Heart left ventricle (tissue), 16 donors: ENCODE measurements at regions of chr10 and their contacts with region 1.

Region 1: GRCh38 chr10:32308027-32308603 is 38.8 kb downstream of the EPC1 start:
- DNase-seq: no peak
- ATAC-seq: no peak
- H3K4me3 ChIP-seq: no peak overlapping the region
- H3K27ac ChIP-seq: no peak overlapping the region
- H3K4me1 ChIP-seq: peaks cover 7 to 71% (median 49%) of the 10 kb centered on the region in 12 donors
- H3K27me3 ChIP-seq: no peaks in the 10 kb centered on the region
- CTCF ChIP-seq: no peak
- POLR2A ChIP-seq: no peak

Region 2: DNA sequence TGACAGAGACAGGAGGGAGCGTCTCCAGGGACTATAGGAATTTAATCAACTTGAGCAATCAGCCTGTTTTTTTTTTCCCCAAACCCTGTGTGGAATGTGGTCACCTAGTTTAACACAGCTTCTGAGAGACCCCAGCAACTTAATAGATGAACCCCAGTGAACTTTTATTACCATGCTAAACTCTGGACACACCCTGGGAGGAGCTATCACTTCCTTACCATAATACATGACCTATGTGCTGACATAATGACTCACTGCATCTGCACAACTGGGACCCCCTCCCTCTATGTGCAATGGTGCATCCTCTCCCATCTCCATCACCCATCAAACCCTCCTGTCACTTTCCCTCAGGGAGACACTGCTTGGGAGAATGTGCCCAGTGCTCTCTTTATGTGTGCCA is 44.8 kb before region 1 on chr10:
- intact Hi-C with region 1: loop called in 1 of 10 experiments (anchors 5 kb)
- DNase-seq: no peak
- ATAC-seq: no peak
- H3K4me3 ChIP-seq: no peak overlapping the region
- H3K27ac ChIP-seq: no peak overlapping the region
- H3K4me1 ChIP-seq: no peaks in the 10 kb centered on the region
- H3K27me3 ChIP-seq: no peaks in the 10 kb centered on the region
- CTCF ChIP-seq: no peak
- POLR2A ChIP-seq: no peak